ENCODE measurements at regions of chr4 and their contacts with region 1.

Region 1: DNA sequence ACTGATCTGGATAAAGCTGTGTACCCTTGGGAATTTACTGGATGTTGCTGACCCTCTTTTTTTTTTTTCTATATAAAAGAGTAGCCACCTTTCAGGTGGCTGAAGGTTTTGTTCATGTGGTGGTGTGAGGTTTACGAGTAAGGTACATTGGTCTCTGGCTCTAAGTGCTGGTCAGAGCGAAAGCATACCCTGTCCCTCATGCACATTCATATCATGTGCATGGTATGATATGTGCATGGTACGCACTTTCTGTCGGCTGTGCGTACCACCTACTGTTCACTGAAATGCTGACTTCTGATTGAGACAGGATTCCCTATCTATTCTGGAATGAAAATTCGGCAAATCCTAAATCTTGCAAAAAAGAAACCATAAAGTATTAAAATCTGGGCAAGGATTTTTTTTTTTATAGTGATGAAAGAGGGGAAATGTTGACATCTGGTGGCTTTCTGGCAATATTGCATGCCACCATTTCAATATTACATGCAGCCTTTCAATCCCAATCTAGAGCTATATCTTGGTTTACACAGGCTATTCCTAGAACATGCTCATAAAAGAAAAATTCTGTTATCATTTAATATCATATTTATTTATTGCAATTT is 32.8 kb downstream of the FAM149A start:
- DNase-seq: no peak
- CTCF ChIP-seq: peak; percentile 42

Region 2: GRCh38 chr4:186067757-186068385 is 69.4 kb before region 1 on chr4:
- in situ Hi-C with region 1: loop called (anchors 10 kb)
- DNase-seq: no peak
- CTCF ChIP-seq: peak; percentile 35

Region 3: GRCh38 chr4:186201535-186202230 is 64.4 kb after region 1 on chr4:
- in situ Hi-C with region 1: no loop called
- DNase-seq: peak; percentile 68
- CTCF ChIP-seq: peak; percentile 66

Region 4: DNA sequence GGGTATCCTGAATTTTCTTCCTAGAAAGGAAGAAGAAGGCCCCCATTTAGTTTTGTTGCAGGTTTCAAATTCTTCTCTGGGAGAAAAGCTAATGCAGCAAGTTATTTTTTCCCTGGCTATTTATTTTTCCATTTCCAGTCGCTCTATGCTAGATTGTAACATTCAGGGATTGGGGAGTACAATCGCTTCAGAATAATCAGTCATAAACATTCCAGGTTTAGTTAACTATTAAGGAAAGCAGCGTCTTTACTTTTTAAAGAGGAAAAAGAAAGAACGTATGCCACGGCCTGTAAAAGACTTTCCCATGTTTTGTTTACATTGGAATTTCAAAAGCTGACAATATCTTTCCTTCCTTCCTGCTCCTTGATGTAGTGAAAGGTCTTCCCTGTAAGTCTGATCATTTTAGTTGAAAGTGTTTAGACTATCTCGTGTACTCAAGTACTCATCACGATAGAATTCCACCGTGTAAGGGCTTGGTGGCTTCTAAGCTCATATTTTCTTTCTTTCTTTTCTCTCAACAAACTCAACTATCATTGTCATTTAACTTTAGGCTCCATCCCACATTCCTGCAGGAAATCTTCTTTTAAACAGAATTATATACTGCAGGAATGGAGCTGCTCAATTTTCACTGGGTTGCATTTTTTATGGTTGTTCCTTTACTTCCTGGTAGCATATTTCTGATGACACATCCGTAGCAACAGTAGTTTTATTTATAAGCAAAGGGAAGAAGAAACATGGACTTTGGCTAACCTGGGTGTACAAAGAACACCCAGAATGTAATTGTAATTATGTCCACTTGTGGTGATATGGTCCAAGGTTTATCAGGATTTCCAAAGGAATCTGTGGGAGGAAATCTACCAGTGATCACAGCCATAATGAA is 799.4 kb after region 1 on chr4:
- in situ Hi-C with region 1: no loop called
- DNase-seq: no peak
- CTCF ChIP-seq: no peak

Measured in GM13976 (cell line).